Mammary epithelial cell (primary cell): ENCODE measurements at regions of chr12 and their contacts with region 1.

Region 1: DNA sequence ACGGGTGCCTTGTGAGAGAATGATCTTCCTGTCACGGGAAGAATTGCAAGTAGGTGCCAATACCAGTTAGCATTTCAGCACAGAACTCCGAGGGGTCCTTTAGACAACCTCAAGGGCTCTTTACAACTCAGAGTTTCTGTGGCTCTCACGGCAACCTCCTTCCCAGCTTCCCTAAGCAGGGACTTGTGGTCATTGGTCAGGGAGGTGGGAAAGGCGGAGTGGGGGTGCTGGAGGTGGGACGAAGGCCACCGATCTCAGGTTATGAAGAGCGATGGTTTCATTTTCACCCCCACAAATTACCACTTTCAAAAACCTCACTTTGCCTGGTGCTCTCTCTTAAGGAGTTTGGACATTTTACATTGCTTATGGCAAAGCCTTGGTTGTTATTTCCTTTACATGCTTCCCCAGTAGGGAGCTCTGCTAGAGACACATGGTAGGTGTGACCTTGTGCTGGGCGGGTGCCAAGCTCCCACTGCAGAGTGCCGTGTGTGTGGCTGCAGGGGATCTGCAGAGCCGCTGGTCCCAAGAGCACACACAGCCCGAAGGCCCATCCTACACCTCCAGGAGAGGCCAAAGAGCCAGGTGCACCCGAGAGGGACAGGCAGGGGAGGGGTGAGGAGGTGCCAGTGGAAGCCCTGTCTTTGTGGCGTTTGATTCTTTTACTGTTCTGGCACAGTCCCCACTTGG is 21.4 kb downstream of the BCL2L14 start:
- DNase-seq: no peak
- H3K4me3 ChIP-seq: no peak overlapping the region
- H3K27ac ChIP-seq: no peak overlapping the region
- H3K4me1 ChIP-seq: no peaks in the 10 kb centered on the region
- H3K27me3 ChIP-seq: no peaks in the 10 kb centered on the region
- CTCF ChIP-seq: no peak

Region 2: GRCh38 chr12:12126551-12126950 is 34.4 kb after region 1 on chr12:
- CTCF ChIA-PET with region 1: no interaction called
- dilution Hi-C with region 1: loop called (anchors 5 kb)
- in situ Hi-C with region 1: no loop called
- intact Hi-C with region 1: no loop called
- DNase-seq: peak; percentile 84
- H3K4me3 ChIP-seq: no peak overlapping the region
- H3K27ac ChIP-seq: no peak overlapping the region
- H3K4me1 ChIP-seq: peaks cover 7% of the 10 kb centered on the region
- H3K27me3 ChIP-seq: no peaks in the 10 kb centered on the region
- CTCF ChIP-seq: no peak

Region 3: DNA sequence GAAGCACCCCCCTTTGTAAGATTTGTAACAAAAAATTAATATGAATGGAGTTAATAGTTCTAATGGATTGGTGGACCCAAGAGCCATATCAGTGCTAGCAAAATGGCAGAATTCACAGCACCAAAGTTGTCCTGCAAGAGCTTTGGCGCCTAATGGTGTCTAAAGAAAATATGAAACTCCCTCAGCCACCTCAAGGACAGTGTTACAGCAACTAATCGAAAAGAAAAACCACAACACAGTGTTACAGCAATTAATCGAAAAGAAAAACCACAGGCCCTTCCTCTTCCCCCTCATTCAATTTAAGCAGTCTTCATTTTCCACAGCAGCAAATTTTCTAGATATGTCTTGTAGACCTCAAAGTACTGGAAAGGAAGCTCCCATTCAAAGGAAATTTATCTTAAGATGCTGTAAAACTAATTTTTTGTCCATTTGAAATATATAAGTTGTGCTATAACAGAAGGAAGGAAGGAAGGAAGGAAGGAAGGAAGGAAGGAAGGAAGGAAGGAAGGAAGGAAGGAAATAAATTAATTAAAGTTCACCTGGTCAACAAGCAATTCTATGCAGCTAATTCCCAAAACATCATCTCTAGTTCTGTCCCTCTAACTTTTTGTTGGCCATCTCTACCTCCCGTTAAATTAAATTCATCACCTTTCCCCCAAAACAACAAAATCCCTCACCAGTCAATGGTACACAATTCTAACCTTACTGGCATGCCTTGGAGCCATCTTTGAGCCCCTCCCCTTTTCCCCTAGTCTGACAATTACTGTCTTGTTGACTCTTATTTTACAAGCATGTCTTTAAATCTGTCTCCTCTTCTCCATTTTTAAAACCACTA is 157.3 kb after region 1 on chr12:
- CTCF ChIA-PET with region 1: interaction called, 10 read pairs
- dilution Hi-C with region 1: no loop called
- in situ Hi-C with region 1: no loop called
- intact Hi-C with region 1: no loop called
- DNase-seq: no peak
- H3K4me3 ChIP-seq: no peak overlapping the region
- H3K27ac ChIP-seq: no peak overlapping the region
- H3K4me1 ChIP-seq: no peaks in the 10 kb centered on the region
- H3K27me3 ChIP-seq: no peaks in the 10 kb centered on the region
- CTCF ChIP-seq: no peak